ENCODE measurements at regions of chr10 and their contacts with region 1.

Region 1: GRCh38 chr10:97025613-97026242 is 160.0 kb downstream of the SLIT1 start:
- DNase-seq: no peak
- H3K4me3 ChIP-seq: no peak overlapping the region
- H3K27ac ChIP-seq: no peak overlapping the region
- H3K4me1 ChIP-seq: peaks cover 19 to 39% (median 33%) of the 10 kb centered on the region in 4 donors
- H3K27me3 ChIP-seq: no peaks in the 10 kb centered on the region
- CTCF ChIP-seq: peak; percentile 40 to 62 (median 51)
- EP300 ChIP-seq: no peak
- POLR2A ChIP-seq: no peak

Region 2: DNA sequence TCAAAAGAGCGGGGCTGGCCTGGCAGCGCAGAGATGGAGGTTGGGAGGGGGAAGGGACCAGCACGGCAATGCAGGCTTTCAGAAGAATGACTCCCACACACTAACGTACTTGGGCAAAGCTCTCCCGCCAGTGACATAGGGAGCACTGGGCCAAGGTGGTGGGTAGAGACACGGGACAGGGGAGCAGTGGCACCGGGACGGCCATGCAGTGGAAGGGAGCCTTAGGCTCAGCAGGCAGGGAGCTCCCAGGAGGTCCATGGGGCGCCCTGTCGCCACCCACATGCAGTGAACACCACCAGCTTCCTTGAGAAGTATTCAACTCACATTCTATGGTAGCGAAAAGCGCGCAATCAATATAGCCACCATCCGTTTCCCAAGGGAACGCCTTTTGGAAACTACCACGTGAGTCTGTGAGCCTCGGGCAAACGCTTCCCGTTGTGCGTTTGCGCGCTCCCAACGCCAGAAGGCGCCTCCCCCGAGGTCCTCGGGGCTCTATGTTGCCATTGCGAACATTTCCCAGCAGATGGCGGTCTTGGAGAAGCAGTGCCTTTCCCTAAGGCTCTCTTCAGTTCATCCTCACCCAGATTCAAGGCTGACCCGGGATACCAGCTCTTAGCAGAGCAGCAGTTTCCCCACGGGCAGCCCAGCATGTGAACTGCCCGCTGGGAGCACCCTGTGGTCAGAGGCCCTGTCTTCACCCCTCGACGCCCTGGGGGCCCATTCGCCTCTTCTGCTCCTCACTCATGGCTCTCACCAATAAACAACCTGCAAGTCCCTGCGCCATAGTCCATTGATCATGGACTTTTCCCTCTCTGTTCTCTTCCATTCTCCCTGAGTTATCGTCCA is 650.5 kb before region 1 on chr10:
- intact Hi-C with region 1: loop called (anchors 10 kb)
- DNase-seq: peak; percentile 94
- H3K4me3 ChIP-seq: peak overlapping the region; percentile 49 to 60 (median 50)
- H3K27ac ChIP-seq: no peak overlapping the region
- H3K4me1 ChIP-seq: peaks cover 7 to 34% (median 32%) of the 10 kb centered on the region in 4 donors
- H3K27me3 ChIP-seq: no peaks in the 10 kb centered on the region
- CTCF ChIP-seq: peak in 2 of 3 experiments; percentile 97
- EP300 ChIP-seq: no peak
- POLR2A ChIP-seq: no peak

Region 3: GRCh38 chr10:96765406-96766240 is 260.1 kb before region 1 on chr10:
- intact Hi-C with region 1: loop called (anchors 5 kb)
- DNase-seq: no peak
- H3K4me3 ChIP-seq: no peak overlapping the region
- H3K27ac ChIP-seq: no peak overlapping the region
- H3K4me1 ChIP-seq: no peaks in the 10 kb centered on the region
- H3K27me3 ChIP-seq: peaks cover 0 to 9% (median 0%) of the 10 kb centered on the region in 4 donors
- CTCF ChIP-seq: peak; percentile 71 to 85 (median 78)
- EP300 ChIP-seq: no peak
- POLR2A ChIP-seq: no peak

Region 4: GRCh38 chr10:96978621-96979154 is 47.0 kb before region 1 on chr10:
- intact Hi-C with region 1: no loop called
- DNase-seq: no peak
- H3K4me3 ChIP-seq: no peak overlapping the region
- H3K27ac ChIP-seq: no peak overlapping the region
- H3K4me1 ChIP-seq: no peaks in the 10 kb centered on the region
- H3K27me3 ChIP-seq: no peaks in the 10 kb centered on the region
- CTCF ChIP-seq: no peak
- EP300 ChIP-seq: no peak
- POLR2A ChIP-seq: no peak

Measured in esophagus muscularis mucosa (tissue), 4 donors.